PC-3 (cell line): ENCODE measurements at regions of chr7 and their contacts with region 1.

Region 1: DNA sequence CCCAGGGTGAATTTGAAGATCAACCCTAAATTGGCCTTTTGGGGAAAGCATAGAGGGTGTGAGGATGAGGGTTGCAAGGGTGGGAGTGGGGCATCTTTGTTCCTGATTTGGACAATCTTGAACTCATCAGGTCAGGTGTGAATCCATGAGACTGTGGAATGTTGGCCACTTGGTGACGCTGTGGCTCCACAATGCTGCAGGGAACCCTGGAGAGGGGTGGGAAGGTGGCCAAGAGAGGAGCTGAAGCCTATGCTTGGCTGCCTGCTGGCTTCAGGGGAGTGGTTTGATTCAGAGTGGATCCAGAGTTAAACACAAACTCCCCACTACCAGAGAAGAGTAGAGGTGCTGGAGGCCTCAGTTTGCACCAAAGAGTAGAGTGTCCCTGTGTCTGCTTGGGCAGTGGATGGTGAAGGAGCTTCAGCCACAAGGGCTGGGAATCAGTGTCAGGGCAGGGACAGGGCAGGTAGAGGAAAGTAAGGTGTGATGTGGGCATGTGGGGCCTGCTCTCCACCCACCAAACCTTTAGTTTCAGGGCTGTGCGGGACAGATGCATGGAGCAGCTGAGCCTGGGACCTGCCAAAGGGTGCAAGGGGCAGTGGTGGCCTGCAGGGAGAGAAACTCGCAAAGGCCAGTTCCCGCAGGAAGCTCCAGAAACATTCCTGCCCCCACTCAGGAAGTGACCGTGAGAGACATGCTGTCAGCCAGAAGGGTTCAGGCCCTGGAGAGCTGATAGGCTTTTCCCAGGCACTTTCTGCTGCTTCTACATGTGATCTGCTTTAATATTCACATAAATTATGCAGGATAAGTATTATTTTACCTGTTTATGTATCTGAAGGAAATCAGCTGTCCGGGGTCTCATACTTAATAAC is 81.0 kb upstream of the PRSS58 start:
- DNase-seq: peak; percentile 61
- ATAC-seq: peak; percentile 64
- H3K4me3 ChIP-seq: no peak overlapping the region
- H3K27ac ChIP-seq: no peak overlapping the region
- H3K4me1 ChIP-seq: no peaks in the 10 kb centered on the region
- H3K27me3 ChIP-seq: peaks cover 68% of the 10 kb centered on the region
- CTCF ChIP-seq: peak; percentile 64

Region 2: GRCh38 chr7:142308918-142309317 is 29.9 kb before region 1 on chr7:
- CTCF ChIA-PET with region 1: no interaction called
- POLR2A ChIA-PET with region 1: no interaction called
- intact Hi-C with region 1: loop called (anchors 1 kb)
- DNase-seq: no peak
- ATAC-seq: no peak
- H3K4me3 ChIP-seq: no peak overlapping the region
- H3K27ac ChIP-seq: no peak overlapping the region
- H3K4me1 ChIP-seq: no peaks in the 10 kb centered on the region
- H3K27me3 ChIP-seq: peaks cover 99% of the 10 kb centered on the region
- CTCF ChIP-seq: no peak

Region 3: GRCh38 chr7:142352543-142352942 is 13.7 kb after region 1 on chr7:
- CTCF ChIA-PET with region 1: interaction called, 3 read pairs
- POLR2A ChIA-PET with region 1: no interaction called
- intact Hi-C with region 1: loop called (anchors 1 kb)
- DNase-seq: no peak
- ATAC-seq: no peak
- H3K4me3 ChIP-seq: no peak overlapping the region
- H3K27ac ChIP-seq: no peak overlapping the region
- H3K4me1 ChIP-seq: peaks cover 32% of the 10 kb centered on the region
- H3K27me3 ChIP-seq: peaks cover 30% of the 10 kb centered on the region
- CTCF ChIP-seq: no peak